Right ventricle myocardium inferior (tissue), 1 donor: ENCODE measurements at regions of chr1 and their contacts with region 1.

Region 1: GRCh38 chr1:201447911-201448871 is 20.8 kb downstream of the PHLDA3 start:
- DNase-seq: peak; percentile 86
- ATAC-seq: peak; percentile 91

Region 2: GRCh38 chr1:201245092-201245491 is 203.1 kb before region 1 on chr1:
- intact Hi-C with region 1: no loop called
- DNase-seq: no peak
- ATAC-seq: no peak

Region 3: DNA sequence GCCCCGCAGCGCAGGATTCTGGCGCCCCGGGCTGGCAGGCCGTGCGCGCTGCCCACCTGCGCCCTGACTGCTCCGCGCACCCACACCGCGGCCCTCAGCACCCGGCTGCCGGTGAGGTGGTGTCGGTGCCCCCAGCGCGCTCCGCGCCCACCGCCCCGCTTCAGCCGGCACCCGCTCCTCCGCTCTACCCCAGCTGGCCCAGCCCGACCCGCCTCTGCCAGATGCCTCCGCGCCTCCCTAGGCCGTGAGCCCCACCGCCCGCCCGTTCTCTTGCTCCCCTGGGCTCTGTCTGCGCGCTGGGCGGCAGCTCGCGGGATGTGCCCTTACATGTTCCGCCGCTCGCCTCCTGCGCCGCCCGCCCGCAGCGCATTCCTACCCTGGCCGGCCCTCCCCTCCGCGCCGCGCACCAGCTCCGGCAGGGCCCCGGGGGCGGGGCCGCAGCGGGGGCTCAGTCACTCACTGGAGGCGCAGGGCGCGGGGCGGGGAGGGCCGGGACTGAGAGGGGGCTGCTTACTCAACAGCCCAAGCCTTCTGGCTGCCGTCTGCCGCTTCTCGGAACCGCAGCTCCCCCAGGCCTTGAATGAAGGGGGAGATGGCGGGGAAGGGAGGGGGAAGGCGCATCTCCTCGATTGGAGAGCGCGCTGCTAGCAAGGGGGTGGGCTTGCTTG is 20.8 kb after region 1 on chr1 and contains the start of gene PHLDA3:
- intact Hi-C with region 1: loop called (anchors 2 kb)
- DNase-seq: peak; percentile 94
- ATAC-seq: peak; percentile 93
- total RNA-seq, gene PHLDA3: 24.3 TPM

Region 4: GRCh38 chr1:201511941-201512539 is 63.8 kb after region 1 on chr1:
- intact Hi-C with region 1: loop called (anchors 2 kb)
- DNase-seq: peak; percentile 86
- ATAC-seq: peak; percentile 86